Naive thymus-derived CD4-positive, alpha-beta T cell (primary cell): ENCODE measurements at regions of chr14 and their contacts with region 1.

Region 1: DNA sequence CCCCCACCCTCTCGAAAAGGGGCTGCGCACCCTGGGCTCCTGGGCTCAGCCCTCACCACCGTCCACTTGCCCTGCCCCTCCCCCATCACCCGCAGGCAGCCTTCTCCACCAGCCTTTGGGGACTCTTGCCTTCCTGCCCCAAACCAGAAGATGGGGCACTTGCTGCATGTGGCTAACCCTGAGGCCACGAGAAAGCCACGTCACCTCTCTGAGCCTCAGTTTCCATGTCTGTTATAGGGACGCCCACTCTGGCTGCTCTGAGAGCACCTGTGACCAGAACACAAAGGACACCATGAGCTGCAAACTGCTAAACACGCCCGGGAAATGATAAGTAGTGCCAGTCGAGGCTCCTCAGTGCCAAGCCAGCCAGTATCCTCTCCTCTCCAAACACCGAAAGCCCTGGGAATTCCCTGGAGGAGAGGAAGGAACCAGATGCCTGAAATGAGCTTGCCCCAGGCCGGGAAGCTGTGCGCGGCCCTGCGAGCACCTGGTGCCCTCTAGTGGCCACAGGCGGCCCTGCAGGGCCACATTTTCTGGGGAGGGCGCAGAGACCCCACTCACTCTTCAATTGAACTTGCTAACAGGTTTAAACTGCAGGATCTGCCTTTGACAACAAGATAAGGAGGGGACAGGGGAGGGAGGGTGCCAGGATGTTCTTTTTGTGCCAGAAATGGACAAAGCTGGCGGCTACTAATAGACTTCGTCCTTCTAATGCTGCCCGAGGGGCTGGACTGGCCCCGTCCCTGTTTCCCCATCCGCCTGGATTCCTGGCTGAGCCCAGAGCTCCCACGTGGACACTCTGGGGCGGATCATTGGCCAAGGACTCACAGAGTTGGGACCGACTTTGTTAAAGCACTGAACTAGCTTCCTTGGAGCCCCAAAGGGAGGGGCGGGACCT is 10.2 kb upstream of the SERPINA9 start:
- DNase-seq: peak in 7 of 9 donors; percentile 13 to 56 (median 30)
- ATAC-seq: peak; percentile 66
- H3K4me3 ChIP-seq: no peak overlapping the region
- H3K4me3 Mint-ChIP-seq: no peak overlapping the region
- H3K27ac ChIP-seq: no peak overlapping the region
- H3K27ac Mint-ChIP-seq: no peak overlapping the region
- H3K4me1 ChIP-seq: no peaks in the 10 kb centered on the region
- H3K4me1 Mint-ChIP-seq: peaks cover 0 to 3% (median 0%) of the 10 kb centered on the region in 7 donors
- H3K27me3 ChIP-seq: peaks cover 0 to 3% of the 10 kb centered on the region in 2 donors
- H3K27me3 Mint-ChIP-seq: peaks cover 2 to 35% (median 26%) of the 10 kb centered on the region in 5 donors

Region 2: GRCh38 chr14:94423453-94424056 is 62.6 kb before region 1 on chr14:
- CTCF ChIA-PET with region 1: no interaction called
- POLR2A ChIA-PET with region 1: no interaction called
- intact Hi-C with region 1: loop called in 1 of 2 experiments (anchors 5 kb)
- DNase-seq: peak in 1 of 9 donors; percentile 37
- ATAC-seq: peak; percentile 56
- H3K4me3 ChIP-seq: no peak overlapping the region
- H3K4me3 Mint-ChIP-seq: no peak overlapping the region
- H3K27ac ChIP-seq: no peak overlapping the region
- H3K27ac Mint-ChIP-seq: no peak overlapping the region
- H3K4me1 ChIP-seq: no peaks in the 10 kb centered on the region
- H3K4me1 Mint-ChIP-seq: peaks cover 0 to 2% (median 0%) of the 10 kb centered on the region in 7 donors
- H3K27me3 ChIP-seq: no peaks in the 10 kb centered on the region
- H3K27me3 Mint-ChIP-seq: peaks cover 24 to 48% (median 28%) of the 10 kb centered on the region in 5 donors

Region 3: DNA sequence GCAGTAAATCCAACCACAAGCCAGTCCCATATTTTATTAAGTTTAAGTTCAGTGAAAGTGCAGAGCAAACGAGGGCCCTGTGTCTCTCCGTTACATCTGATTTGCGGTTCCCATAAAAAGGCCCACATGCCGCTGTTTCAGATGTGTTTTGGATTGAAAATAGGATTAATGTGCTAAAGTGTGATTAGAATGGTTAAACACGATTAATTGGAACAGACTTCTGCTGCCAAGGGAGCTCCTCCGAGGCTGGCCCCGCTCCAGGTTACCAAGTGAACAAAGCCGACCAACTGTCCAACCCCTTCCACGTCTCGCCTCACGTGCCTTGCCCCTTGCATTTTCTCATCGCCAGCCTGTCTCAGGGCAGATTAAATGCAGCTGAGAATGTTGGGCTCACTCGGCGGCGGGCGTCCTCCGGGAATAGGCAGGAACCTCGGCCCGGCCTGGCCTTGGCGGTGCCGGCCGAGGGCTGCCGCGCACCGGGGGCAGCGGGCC is 450.3 kb after region 1 on chr14:
- CTCF ChIA-PET with region 1: no interaction called
- POLR2A ChIA-PET with region 1: no interaction called
- intact Hi-C with region 1: no loop called
- DNase-seq: no peak
- ATAC-seq: no peak
- H3K4me3 ChIP-seq: no peak overlapping the region
- H3K4me3 Mint-ChIP-seq: no peak overlapping the region
- H3K27ac ChIP-seq: no peak overlapping the region
- H3K27ac Mint-ChIP-seq: no peak overlapping the region
- H3K4me1 ChIP-seq: no peaks in the 10 kb centered on the region
- H3K4me1 Mint-ChIP-seq: no peaks in the 10 kb centered on the region
- H3K27me3 ChIP-seq: no peaks in the 10 kb centered on the region
- H3K27me3 Mint-ChIP-seq: peaks cover 0 to 4% (median 0%) of the 10 kb centered on the region in 5 donors

Region 4: GRCh38 chr14:95365401-95365800 is 879.2 kb after region 1 on chr14:
- CTCF ChIA-PET with region 1: no interaction called
- POLR2A ChIA-PET with region 1: no interaction called
- intact Hi-C with region 1: no loop called
- DNase-seq: no peak
- ATAC-seq: no peak
- H3K4me3 ChIP-seq: no peak overlapping the region
- H3K4me3 Mint-ChIP-seq: no peak overlapping the region
- H3K27ac ChIP-seq: no peak overlapping the region
- H3K27ac Mint-ChIP-seq: no peak overlapping the region
- H3K4me1 ChIP-seq: no peaks in the 10 kb centered on the region
- H3K4me1 Mint-ChIP-seq: peaks cover 0 to 5% (median 0%) of the 10 kb centered on the region in 7 donors
- H3K27me3 ChIP-seq: peaks cover 0 to 3% of the 10 kb centered on the region in 2 donors
- H3K27me3 Mint-ChIP-seq: peaks cover 43 to 65% (median 53%) of the 10 kb centered on the region in 5 donors